Ovary (tissue), 10 donors: ENCODE measurements at regions of chr17 and their contacts with region 1.

Region 1: GRCh38 chr17:43576563-43577229 is 30.6 kb upstream of the ETV4 start:
- DNase-seq: peak; percentile 49 to 82 (median 75)
- H3K4me3 ChIP-seq: no peak overlapping the region
- H3K27ac ChIP-seq: no peak overlapping the region
- H3K4me1 ChIP-seq: no peaks in the 10 kb centered on the region
- H3K27me3 ChIP-seq: no peaks in the 10 kb centered on the region
- CTCF ChIP-seq: peak; percentile 69 to 89 (median 83)
- EP300 ChIP-seq: no peak
- POLR2A ChIP-seq: no peak

Region 2: DNA sequence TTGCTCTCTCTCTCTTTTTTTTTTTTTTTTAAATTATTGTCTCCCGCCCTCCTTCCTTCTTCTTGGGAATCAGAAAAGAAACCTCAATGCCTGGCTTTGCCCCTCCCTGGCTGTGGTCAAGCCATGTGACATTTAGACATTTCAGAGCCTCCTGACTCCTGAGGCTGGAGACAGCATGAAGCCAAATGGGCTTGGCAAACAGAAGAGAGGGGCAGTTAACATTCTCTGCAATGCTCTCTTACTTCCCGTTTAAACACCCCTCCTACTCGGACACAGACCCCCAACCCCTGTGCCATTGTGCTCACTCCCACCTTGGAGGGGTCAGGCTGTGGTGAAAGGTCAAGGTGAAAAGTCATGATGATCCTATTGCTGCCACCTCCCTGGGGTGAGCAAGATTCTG is 99.8 kb after region 1 on chr17:
- intact Hi-C with region 1: loop called in 3 of 4 experiments (anchors 1 to 2 kb)
- DNase-seq: no peak
- H3K4me3 ChIP-seq: no peak overlapping the region
- H3K27ac ChIP-seq: no peak overlapping the region
- H3K4me1 ChIP-seq: no peaks in the 10 kb centered on the region
- H3K27me3 ChIP-seq: no peaks in the 10 kb centered on the region
- CTCF ChIP-seq: no peak
- EP300 ChIP-seq: no peak
- POLR2A ChIP-seq: no peak

Region 3: GRCh38 chr17:43784628-43785101 is 208.0 kb after region 1 on chr17:
- intact Hi-C with region 1: no loop called
- DNase-seq: no peak
- H3K4me3 ChIP-seq: no peak overlapping the region
- H3K27ac ChIP-seq: no peak overlapping the region
- H3K4me1 ChIP-seq: no peaks in the 10 kb centered on the region
- H3K27me3 ChIP-seq: no peaks in the 10 kb centered on the region
- CTCF ChIP-seq: no peak
- EP300 ChIP-seq: no peak
- POLR2A ChIP-seq: no peak

Region 4: GRCh38 chr17:43854453-43854852 is 277.8 kb after region 1 on chr17:
- intact Hi-C with region 1: loop called in 1 of 4 experiments (anchors 5 kb)
- DNase-seq: no peak
- H3K4me3 ChIP-seq: no peak overlapping the region
- H3K27ac ChIP-seq: no peak overlapping the region
- H3K4me1 ChIP-seq: no peaks in the 10 kb centered on the region
- H3K27me3 ChIP-seq: no peaks in the 10 kb centered on the region
- CTCF ChIP-seq: no peak
- EP300 ChIP-seq: no peak
- POLR2A ChIP-seq: no peak